Left ventricle myocardium superior (tissue), 1 donor: ENCODE measurements at regions of chr6 and their contacts with region 1.

Region 1: GRCh38 chr6:157323255-157323965 is at the start of gene TMEM242:
- DNase-seq: peak; percentile 94
- ATAC-seq: peak; percentile 96
- total RNA-seq, gene TMEM242: 19.4 TPM

Region 2: DNA sequence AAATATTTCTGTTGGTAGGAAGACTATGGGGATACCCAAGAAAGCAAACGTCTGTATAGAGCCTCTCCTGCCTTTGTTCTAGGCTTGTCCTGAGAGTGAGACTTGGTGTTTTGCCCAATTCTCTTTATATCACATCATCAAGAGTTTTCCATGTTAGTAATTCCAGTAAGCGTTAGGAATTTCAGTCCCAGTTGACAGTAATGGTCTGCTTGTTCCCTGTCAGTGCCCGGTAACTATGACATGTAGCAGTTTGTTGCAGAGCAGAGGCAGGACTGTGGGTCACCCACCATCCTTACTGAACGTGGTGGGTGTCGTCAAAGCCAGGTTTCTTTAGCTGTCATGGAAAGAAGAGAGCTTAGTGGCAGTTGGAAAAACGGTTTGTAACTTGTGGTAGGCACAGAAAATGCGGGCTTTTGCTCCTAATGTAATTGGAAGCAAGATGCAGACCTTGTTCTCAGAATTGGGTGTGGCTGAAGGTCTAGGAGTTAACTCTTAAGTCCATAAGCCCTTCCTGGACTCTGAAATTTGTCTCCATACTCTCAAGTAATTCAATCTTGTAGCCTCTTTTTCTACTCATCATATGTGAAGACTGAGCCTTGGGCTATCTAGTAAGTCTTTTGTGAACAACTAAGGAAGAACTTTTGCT is 188.9 kb before region 1 on chr6:
- intact Hi-C with region 1: no loop called
- DNase-seq: no peak
- ATAC-seq: peak; percentile 91

Region 3: GRCh38 chr6:157579467-157580031 is 256.1 kb after region 1 on chr6:
- intact Hi-C with region 1: loop called (anchors 10 kb)
- DNase-seq: no peak
- ATAC-seq: peak; percentile 68